ENCODE measurements at regions of chr1 and their contacts with region 1.

Region 1: GRCh38 chr1:59707178-59707791 is 107.5 kb upstream of the HOOK1 start:
- DNase-seq: peak; percentile 54
- ATAC-seq: peak; percentile 86 to 96

Region 2: DNA sequence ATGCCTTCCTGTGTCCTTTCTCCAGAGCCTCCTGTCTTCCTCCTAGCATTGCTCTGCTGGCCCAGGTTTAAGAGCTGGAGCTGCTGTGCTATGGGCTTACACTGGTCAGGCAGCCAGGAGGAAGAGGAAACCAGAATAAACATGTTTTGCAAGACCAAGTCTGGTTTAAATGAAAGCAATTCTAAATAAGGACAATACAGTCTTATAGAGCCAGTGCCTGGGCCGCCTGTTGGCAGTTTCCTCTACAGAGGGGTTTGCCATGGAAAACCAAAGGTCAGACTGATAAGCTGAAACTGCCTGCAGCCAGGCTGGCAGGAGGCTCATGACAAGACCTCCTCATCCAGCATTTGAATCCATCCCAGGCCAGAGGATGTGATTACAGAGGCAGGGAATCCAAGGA is 503.3 kb before region 1 on chr1:
- intact Hi-C with region 1: no loop called
- DNase-seq: peak; percentile 53
- ATAC-seq: peak; percentile 88 to 95

Region 3: DNA sequence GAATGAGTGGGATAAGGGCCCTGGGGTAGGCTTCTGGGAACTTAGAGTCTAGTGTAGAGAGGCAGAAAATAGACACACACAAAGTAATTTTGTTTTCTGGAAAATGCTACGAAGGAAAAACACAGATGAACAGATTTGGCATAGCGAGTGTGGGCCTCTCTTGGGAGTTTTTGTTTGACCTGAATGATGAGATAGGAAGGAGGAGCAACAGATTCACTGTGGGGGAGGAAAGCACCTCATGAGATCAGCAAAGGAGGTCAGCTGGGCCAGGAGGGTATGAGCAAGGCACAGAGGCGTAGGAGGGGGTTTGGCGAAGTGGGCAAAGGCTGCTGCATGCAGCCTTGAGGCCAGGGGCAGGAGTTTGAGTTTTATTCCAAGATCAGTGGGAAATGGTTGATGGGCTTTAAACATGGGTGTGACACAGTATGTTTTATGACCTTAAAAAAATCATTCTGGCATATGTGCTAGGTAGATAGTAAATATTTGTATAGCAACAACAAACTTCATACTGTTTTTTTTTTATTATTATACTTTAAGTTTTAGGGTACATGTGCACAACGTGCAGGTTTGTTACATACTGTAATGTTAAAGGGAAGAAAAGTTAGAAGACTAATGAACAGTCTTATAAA is 352.5 kb before region 1 on chr1:
- intact Hi-C with region 1: no loop called
- DNase-seq: no peak
- ATAC-seq: peak; percentile 12 to 92

Region 4: GRCh38 chr1:59692591-59692990 is 14.7 kb before region 1 on chr1:
- intact Hi-C with region 1: no loop called
- DNase-seq: no peak
- ATAC-seq: peak; percentile 54 to 79

Region 5: GRCh38 chr1:59759156-59759925 is 52.1 kb after region 1 on chr1:
- intact Hi-C with region 1: loop called in 1 of 2 experiments (anchors 10 kb)
- DNase-seq: peak; percentile 83
- ATAC-seq: peak; percentile 95 to 96